ENCODE measurements at regions of chr10 and their contacts with region 1.

Region 1: GRCh38 chr10:43671656-43672531 is 23.2 kb upstream of the ZNF32 start:
- DNase-seq: peak; percentile 27
- H3K4me3 Mint-ChIP-seq: no peak overlapping the region
- H3K27ac Mint-ChIP-seq: no peak overlapping the region
- H3K4me1 Mint-ChIP-seq: peaks cover 7% of the 10 kb centered on the region
- H3K27me3 Mint-ChIP-seq: peaks cover 27% of the 10 kb centered on the region

Region 2: GRCh38 chr10:44030143-44030542 is 358.2 kb after region 1 on chr10:
- intact Hi-C with region 1: loop called (anchors 1 kb)
- DNase-seq: no peak
- H3K4me3 Mint-ChIP-seq: no peak overlapping the region
- H3K27ac Mint-ChIP-seq: no peak overlapping the region
- H3K4me1 Mint-ChIP-seq: no peaks in the 10 kb centered on the region
- H3K27me3 Mint-ChIP-seq: peaks cover 10% of the 10 kb centered on the region

Region 3: DNA sequence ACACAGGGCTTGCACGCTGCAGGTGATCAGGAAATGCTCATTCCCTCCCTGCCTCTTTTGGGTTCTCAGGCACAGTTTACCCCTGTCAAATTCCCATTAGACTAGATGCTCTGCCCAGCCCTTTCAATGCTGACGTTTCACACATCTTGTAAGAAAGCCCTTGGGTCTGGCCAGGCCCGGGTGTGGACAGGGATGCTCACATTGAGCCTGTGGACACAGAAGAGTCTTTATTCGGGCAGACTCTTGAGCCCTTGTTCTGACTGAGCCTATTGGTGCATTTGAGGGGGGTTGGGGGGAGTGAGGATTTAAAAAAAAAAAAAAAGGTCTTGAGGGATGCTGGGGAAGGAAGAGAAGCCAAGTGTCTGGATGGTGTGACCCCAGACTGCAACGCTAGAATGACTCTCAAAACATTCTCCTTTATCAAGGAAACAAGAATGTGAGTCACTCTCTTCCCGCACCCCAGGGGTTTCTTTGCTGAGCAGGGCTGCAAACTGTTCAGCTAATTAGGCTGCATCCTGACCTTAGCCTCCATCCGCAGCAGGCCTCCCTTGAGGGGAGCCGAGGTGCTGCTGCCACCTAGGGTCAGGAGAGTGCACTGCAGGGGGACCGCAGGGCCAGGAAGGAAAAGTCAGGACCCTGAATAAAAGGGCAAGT is 1185.6 kb after region 1 on chr10:
- intact Hi-C with region 1: loop called (anchors 2 kb)
- DNase-seq: peak; percentile 35
- H3K4me3 Mint-ChIP-seq: no peak overlapping the region
- H3K27ac Mint-ChIP-seq: no peak overlapping the region
- H3K4me1 Mint-ChIP-seq: no peaks in the 10 kb centered on the region
- H3K27me3 Mint-ChIP-seq: peaks cover 3% of the 10 kb centered on the region

Region 4: DNA sequence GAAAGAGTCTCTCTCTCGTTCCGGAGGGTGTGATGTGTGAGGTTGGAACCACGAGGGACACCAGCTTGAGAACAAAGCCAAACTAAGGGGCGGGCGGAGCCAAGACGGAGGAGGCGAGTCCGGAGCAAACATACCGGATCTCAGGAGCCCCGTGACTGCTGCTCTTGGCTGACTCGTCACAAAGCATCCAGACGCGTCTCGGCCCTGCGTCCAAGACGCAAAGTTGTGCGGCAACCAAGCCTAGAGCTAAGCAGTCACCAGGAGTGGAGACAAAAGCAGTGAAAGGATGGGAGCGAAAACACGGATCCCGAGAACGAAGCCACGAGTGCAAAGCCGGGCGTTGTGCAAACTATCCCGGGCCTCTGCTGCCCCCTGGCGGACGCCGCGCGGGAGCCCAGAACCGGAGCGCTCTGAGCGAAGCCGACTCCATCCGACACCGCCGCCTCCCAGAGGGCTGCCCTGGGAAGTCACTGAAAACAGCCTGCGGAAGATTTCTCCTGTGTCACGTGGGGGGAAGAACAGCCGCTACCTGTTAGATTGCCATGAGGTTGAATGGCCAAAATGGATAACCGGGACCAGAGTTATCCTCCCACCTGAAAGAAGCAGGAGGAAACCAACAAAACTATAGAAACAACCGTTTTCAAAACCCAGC is 1192.9 kb after region 1 on chr10:
- intact Hi-C with region 1: loop called (anchors 1 kb)
- DNase-seq: peak; percentile 72
- H3K4me3 Mint-ChIP-seq: peak overlapping the region; percentile 89
- H3K27ac Mint-ChIP-seq: peak overlapping the region; percentile 54
- H3K4me1 Mint-ChIP-seq: peaks cover 17% of the 10 kb centered on the region
- H3K27me3 Mint-ChIP-seq: peaks cover 51% of the 10 kb centered on the region